Cardiac septum (tissue), 1 donor: ENCODE measurements at regions of chr20 and their contacts with region 1.

Region 1: GRCh38 chr20:45406259-45407066 is 1.6 kb upstream of the DBNDD2 start:
- DNase-seq: peak; percentile 92

Region 2: GRCh38 chr20:45235995-45236394 is 170.5 kb before region 1 on chr20:
- intact Hi-C with region 1: no loop called
- DNase-seq: no peak

Region 3: DNA sequence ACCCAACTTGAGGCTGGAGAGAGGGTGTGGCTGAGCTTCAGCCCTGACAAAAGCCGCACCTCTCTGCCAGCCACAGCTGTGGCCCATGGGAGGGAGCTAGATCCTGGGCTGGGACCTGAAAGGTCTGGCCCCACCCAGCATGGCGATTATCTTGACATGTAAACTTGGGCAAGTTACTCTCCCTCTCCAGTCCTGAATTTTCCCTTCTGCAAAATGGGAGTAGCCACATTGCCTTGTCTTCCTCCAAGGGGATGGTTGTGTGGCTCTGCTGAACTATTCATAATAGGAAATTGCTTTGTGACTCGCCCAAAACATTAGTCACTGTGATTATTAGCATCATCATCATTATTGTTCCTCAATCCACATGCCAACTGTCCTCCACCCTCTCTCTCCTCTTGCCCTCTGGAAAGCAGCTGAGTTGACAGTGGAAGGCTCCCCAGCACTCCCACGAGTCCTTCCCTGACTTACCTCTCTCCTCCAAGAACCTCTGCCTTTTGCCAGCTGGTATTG is 122.9 kb before region 1 on chr20:
- intact Hi-C with region 1: no loop called
- DNase-seq: no peak

Region 4: DNA sequence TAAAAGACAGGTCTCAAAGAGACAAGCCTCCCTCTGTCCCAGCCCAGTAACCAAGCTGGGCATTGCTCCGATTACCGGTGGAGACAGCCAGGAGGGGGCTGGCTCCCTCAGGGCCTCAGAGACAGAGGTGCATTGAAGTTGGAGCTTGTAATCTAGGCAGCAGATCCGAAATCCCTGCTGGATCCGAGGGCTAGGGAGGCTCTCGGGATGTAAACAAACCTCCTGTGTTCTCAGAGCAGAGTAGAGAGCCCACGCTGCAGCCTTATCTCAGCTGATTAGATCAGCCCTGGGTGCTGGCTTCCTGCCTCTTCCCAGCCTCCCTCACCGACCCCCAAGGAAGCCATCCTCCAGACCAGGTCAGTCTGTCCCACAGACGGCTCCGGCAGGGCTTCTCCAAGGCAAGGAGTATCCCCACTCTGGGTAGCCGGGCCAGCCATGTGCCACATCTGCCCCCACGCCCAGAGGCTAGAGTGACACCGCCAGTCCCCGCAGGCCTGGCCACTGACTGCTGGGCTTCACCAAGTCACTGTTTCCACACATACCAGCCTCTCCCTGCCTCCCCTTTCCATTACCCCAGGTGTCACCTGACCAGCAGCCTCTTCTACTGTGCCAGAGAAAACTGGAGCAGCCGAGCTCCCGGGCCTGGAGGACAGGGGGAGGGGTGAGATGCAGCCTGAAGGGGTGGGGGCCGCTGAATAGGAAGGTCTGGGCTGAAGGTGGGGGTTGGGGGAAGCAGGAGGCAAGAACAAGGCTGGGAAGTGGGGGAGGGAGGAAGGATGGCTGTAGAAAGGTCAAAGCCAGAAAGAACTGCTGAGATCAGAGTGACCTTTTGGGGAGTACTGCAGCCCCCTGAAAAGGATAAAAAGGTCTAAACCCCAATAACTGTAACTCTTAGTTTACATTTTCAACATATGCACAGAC is 64.3 kb before region 1 on chr20:
- intact Hi-C with region 1: loop called (anchors 2 kb)
- DNase-seq: peak; percentile 90

Region 5: GRCh38 chr20:45362804-45363610 is 43.5 kb before region 1 on chr20 and contains the start of gene SYS1:
- intact Hi-C with region 1: loop called (anchors 5 kb)
- DNase-seq: peak; percentile 99
- total RNA-seq, gene SYS1: 17.4 TPM

Region 6: DNA sequence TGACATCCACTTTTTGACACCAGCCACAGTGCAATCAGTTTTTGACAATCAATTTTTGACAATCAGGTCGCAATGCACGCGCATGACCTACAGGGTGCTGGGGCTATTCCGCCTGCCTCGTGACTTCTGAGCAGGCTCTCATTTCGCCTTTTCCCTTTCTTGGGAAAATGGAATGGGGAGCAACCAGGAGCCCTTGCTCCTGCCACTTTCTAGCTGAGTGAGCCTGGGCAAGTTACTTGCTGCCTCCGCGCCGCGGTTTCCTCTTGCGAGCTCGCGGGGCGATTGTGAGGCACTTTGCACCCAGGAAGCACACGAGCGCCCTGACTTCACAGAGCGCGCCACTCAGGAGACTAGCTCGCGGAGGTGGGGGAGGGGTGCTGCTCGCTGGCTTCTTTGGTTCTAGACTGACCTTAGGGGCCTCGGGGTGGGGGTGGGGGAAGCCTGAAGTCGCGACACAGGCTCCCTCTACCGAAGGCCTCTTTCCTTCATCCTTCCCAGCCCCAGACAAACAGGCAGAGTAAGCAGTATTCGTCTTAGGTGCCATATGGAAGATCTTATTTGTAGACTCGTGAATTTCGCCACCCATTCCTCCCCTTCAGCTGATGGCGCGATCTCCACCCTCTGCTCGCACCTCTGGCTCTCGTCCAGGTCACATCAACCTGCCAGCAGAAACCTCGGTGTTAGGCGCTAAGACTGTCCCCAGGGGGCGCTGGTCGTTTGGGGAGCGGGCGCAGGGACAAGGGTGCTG is 32.9 kb before region 1 on chr20:
- intact Hi-C with region 1: loop called (anchors 5 kb)
- DNase-seq: peak; percentile 95

Region 7: DNA sequence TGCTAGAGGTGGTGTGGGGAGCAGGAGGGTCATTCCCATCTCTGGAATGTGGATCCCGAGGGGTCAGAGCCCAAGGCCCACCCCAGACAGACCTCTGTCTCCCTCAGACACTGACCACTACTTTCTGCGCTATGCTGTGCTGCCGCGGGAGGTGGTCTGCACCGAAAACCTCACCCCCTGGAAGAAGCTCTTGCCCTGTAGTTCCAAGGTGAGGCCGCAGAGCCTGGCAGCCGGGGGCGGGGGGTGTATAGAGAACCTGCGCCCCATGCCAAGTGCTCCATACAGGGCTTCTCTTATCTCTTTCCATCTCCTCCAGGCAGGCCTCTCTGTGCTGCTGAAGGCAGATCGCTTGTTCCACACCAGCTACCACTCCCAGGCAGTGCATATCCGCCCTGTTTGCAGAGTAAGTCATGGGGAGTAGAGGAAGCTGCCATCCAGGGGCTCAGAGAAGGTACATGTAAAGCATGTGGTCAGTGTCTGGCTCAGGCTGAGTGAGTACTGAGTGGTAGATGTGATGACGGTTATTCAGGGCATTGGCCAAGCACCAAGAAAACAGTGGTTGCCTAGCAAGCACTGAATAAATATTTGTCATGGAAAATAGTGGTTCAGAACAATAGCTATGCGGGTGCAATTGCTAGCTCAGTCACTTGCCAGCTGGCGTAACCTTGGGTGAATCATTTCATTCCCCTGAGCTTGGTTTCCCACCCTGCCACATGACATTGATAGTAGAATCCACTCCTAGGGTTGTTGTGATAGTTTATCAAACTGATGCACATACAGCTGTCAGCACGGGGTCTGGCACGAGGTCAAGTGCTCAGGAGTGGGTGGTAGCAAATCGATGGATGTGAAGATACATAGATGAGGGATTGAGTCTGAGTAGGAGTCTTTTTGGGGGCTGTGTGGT is 13.0 kb after region 1 on chr20:
- intact Hi-C with region 1: loop called (anchors 1 kb)
- DNase-seq: peak; percentile 82